ENCODE measurements at regions of chr16 and their contacts with region 1.

Region 1: GRCh38 chr16:68420366-68420951 is 27.8 kb downstream of the SMPD3 start:
- DNase-seq: no peak
- H3K4me3 ChIP-seq: no peak overlapping the region
- CTCF ChIP-seq: no peak

Region 2: GRCh38 chr16:68382296-68382718 is 38.2 kb before region 1 on chr16:
- in situ Hi-C with region 1: loop called (anchors 5 kb)
- DNase-seq: no peak
- H3K4me3 ChIP-seq: no peak overlapping the region
- CTCF ChIP-seq: no peak

Region 3: GRCh38 chr16:68486502-68487202 is 66.2 kb after region 1 on chr16:
- in situ Hi-C with region 1: loop called (anchors 5 kb)
- DNase-seq: no peak
- H3K4me3 ChIP-seq: no peak overlapping the region
- CTCF ChIP-seq: no peak